Colonic mucosa (tissue), 4 donors: ENCODE measurements at regions of chr1 and their contacts with region 1.

Region 1: DNA sequence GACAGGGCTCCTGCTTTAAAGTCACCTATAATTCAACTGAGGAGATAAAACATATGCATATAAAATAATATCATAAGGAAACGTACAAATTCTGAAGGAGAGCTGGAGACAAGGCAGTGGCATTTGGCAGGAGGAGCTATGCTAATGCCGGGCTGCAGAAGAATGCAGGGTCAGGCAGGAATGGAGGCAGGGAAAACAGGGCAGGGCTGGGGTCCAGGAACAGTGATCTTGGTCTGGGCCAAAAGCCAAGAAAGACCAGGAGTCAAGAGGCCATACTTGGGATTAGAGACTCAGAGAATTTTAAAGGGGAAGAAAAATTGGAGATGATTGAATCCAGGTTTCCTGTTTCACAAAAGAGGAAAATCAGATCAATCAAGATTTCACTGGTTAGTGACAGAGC is 20.0 kb upstream of the BRDT start:
- DNase-seq: no peak
- H3K4me3 ChIP-seq: no peak overlapping the region
- H3K27ac ChIP-seq: no peak overlapping the region
- H3K4me1 ChIP-seq: no peaks in the 10 kb centered on the region
- H3K27me3 ChIP-seq: no peaks in the 10 kb centered on the region
- CTCF ChIP-seq: no peak

Region 2: DNA sequence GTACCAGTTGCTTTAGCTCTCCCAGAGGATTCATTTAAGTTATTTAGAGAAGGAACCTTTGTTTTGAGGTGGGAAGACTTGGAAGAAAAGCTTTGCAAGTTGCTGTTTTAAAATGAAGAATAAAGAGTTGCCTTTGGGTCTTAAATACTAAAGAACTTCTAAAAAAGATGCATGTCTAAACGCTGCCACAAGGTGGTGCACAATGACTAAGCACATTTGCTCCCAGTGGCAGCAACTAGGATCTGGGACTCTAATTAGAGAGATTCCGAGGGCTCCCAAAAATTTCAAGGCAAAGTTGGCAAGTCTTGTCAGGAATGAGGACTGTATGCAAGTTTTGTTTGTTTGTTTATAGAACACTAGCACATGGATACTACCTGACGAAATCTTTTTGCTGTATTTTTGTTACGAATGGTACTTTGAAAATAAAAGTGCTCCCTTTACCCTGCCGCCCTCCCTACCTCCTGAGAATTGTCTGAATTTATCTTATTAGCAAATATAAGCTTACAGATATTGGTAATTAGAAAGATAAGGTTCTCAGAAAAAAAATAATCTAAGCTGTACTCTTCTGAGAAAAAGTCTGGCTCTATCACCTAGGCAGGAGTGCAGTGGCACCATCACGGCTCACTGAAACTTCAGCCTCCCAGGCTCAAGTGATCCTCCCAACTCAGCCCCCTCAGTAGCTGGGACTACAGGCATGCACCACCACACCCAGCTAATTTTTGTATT is 646.4 kb before region 1 on chr1:
- intact Hi-C with region 1: loop called (anchors 5 kb)
- DNase-seq: peak; percentile 55
- H3K4me3 ChIP-seq: no peak overlapping the region
- H3K27ac ChIP-seq: no peak overlapping the region
- H3K4me1 ChIP-seq: no peaks in the 10 kb centered on the region
- H3K27me3 ChIP-seq: no peaks in the 10 kb centered on the region
- CTCF ChIP-seq: peak; percentile 68

Region 3: DNA sequence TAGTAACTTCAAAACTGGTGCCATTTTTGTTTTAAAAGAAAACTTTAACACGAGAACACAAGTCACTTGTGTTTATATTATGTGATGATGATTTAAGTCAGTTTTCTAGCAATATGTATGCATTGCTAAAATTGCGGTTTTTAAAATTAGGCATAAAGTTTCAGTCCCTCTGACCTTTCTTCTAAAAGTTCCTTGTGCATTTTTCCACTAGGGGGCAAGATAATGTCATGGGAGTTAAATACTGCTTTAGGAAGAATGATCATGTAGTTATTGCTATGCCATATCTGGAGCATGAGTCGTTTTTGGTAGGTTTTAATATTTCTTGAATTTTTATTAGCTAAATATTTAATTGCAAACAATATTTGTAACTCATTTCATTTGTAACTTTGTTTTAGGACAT is 417.9 kb before region 1 on chr1:
- intact Hi-C with region 1: loop called (anchors 2 kb)
- DNase-seq: no peak
- H3K4me3 ChIP-seq: no peak overlapping the region
- H3K27ac ChIP-seq: no peak overlapping the region
- H3K4me1 ChIP-seq: no peaks in the 10 kb centered on the region
- H3K27me3 ChIP-seq: no peaks in the 10 kb centered on the region
- CTCF ChIP-seq: peak; percentile 60

Region 4: DNA sequence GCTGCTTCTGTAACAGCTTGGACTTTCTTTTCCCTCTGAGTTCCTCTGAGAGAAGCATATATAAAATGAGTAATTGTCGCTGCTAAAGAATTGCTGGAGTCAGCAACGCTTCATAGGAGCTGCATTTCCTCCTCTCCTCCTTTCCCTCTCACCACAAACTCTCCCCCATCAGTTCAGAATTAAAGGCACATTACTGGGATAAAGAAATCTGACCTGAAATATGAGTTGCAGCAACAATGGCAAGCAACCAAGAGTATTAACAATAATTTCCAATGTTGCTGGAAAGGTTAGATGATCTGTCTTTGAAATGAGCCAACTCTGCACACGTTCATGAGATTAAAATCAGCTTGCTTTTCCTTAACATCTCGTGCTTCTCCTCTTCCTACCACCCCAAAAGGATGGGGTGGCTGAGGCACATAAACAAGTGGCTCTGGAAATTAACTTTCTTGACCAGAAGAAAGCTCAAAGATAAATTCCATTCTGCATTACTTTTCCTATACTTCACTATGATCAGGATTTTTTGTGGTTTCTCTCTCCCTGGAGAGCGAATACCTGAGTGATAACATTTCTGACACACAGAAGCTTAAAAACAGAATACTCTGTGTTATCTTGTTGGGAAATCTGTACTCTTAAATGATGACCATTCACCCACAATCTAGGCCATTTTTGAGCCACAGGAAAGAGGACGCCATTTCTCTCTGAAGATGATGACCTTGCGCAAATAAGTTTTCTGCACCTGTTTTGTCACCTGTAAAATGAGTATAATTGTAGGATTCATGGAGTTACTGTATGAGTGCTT is 133.5 kb before region 1 on chr1:
- intact Hi-C with region 1: no loop called
- DNase-seq: no peak
- H3K4me3 ChIP-seq: no peak overlapping the region
- H3K27ac ChIP-seq: no peak overlapping the region
- H3K4me1 ChIP-seq: no peaks in the 10 kb centered on the region
- H3K27me3 ChIP-seq: no peaks in the 10 kb centered on the region
- CTCF ChIP-seq: no peak